A549 (cell line): ENCODE measurements at regions of chr3 and their contacts with region 1.

Region 1: DNA sequence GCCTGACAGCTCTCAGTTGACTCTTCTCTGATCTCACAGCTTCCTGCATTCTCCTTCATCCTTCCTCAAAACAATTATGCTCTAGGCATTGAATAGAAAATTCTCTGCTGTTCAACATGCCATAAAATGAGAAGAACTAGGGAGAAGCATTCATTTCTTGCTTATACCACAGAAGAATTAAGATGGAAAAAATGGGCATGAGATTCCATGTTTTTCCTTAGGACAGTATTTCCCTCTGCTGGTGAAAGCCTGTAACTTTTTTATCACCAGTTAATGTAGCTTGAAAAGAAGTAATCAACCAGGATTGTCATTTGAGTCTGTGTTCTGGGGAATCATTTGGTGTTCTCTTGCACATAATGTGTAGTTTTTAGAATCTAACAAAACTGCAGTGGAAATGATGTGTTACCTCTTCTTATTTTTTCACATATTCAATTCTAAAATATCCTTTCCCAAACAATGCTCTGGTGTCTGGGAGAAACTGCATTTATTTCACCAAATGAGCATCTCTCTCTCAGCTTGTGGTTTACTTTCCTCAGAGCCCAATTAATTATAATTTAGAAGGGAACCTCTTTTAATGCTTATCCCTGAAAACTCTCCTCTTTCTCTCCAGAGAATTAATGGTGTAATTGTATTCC is 92.8 kb upstream of the DCBLD2 start:
- DNase-seq: peak in 1 of 2 experiments; percentile 69
- ATAC-seq: peak; percentile 65 to 88; a peak in 5 of 6 replicates
- H3K4me3 ChIP-seq: no peak overlapping the region
- H3K27ac ChIP-seq: peak overlapping the region; percentile 44 to 64; a peak in 4 of 6 replicates
- H3K4me1 ChIP-seq: peaks cover 6% of the 10 kb centered on the region; the same call in 2 of the 3 replicates
- CTCF ChIP-seq: peak; percentile 90
- EP300 ChIP-seq: no peak
- POLR2A ChIP-seq: no peak
- RAD21 ChIP-seq: peak; percentile 94 to 97

Region 2: GRCh38 chr3:98593046-98593936 is 401.0 kb before region 1 on chr3 and contains the start of gene CPOX:
- CTCF ChIA-PET with region 1: interaction called, 24 read pairs
- POLR2A ChIA-PET with region 1: interaction called, 3 read pairs
- DNase-seq: peak; percentile 81 to 88
- ATAC-seq: peak; percentile 97 to 99
- H3K4me3 ChIP-seq: peak within 1 kb of the TSS; percentile 85
- H3K27ac ChIP-seq: peak within 1 kb of the TSS; percentile 77 to 86
- H3K4me1 ChIP-seq: peaks cover 11% of the 10 kb centered on the region; the same call in 1 of the 3 replicates
- CTCF ChIP-seq: no peak
- EP300 ChIP-seq: no peak
- POLR2A ChIP-seq: peak; percentile 50; the same call in 1 of the 2 replicates
- RAD21 ChIP-seq: no peak
- polyA plus RNA-seq, gene CPOX: 28.0 and 30.3 TPM in 2 replicates

Region 3: DNA sequence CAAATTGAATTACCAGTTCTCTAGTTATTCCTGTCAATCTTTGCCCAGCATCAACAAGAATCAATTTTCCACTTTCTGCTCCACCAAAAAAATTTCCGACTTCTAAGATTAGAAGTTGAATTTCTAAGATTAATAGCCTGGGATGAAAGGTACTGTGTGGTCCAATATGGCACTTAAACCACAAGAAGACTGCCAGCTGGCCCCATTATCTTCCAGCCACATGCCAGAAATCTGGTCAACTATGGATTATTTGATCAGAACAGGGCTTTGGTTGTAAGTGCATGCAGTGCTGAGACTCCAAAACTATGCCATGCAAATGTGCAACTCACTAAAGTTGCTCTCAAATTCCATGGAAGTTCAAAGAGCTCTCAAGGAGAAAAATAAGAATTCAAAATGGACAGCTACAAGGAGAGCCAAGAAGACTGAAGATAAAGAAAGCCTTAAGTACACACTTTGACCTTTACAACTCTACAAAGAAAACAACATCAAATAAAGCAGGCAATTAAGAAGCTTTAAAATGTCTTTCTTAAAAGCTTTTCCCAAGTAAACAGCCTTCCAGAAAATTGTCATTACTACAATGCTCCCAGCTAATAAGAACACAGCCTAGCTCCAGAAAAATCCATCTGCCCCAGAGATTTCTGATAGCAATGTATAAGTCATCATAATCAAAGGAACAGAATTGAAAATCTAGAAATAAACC is 166.9 kb before region 1 on chr3:
- CTCF ChIA-PET with region 1: interaction called, 11 read pairs
- POLR2A ChIA-PET with region 1: no interaction called
- DNase-seq: no peak
- ATAC-seq: no peak
- H3K4me3 ChIP-seq: no peak overlapping the region
- H3K27ac ChIP-seq: 0 out of 6 replicates have a peak overlapping the region, but pooled peaks of 1 of the 2 experiments have one; percentile 6
- H3K4me1 ChIP-seq: peaks cover 36% of the 10 kb centered on the region
- CTCF ChIP-seq: no peak
- EP300 ChIP-seq: no peak
- POLR2A ChIP-seq: no peak
- RAD21 ChIP-seq: no peak

Region 4: DNA sequence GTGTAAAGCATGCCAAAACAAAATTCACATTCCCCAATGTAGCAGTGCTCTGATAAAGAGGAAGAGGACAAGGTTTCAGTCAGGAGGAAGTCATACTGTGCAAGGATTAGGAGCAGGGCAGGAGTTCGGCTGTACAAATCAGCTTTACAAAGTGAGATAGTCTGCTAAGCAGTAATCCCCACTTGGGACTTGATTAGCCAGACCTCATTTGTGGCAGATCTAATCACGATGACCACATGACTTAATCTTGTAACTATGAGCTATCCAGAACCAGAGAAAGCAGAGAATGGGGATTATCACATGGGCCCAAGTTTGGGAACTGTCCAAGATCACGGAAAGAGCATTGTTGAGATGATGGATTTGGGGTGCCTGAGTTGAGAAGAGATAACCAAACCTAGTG is 100.5 kb before region 1 on chr3:
- CTCF ChIA-PET with region 1: interaction called, 13 read pairs
- POLR2A ChIA-PET with region 1: interaction called, 5 read pairs
- DNase-seq: no peak
- ATAC-seq: peak; percentile 5 to 33; a peak in 3 of 6 replicates
- H3K4me3 ChIP-seq: peak overlapping the region; percentile 93
- H3K27ac ChIP-seq: peak overlapping the region; percentile 86 to 95
- H3K4me1 ChIP-seq: peaks cover 76% of the 10 kb centered on the region
- CTCF ChIP-seq: no peak
- EP300 ChIP-seq: no peak
- POLR2A ChIP-seq: no peak
- RAD21 ChIP-seq: no peak

Region 5: GRCh38 chr3:98921957-98922356 is 72.3 kb before region 1 on chr3:
- CTCF ChIA-PET with region 1: interaction called, 12 read pairs
- POLR2A ChIA-PET with region 1: no interaction called
- DNase-seq: no peak
- ATAC-seq: no peak
- H3K4me3 ChIP-seq: no peak overlapping the region
- H3K27ac ChIP-seq: peak overlapping the region; percentile 95 to 99
- H3K4me1 ChIP-seq: peaks cover 75% of the 10 kb centered on the region
- CTCF ChIP-seq: no peak
- EP300 ChIP-seq: no peak
- POLR2A ChIP-seq: no peak
- RAD21 ChIP-seq: no peak